Tibial artery (tissue), 4 donors: ENCODE measurements at regions of chr9 and their contacts with region 1.

Region 1: DNA sequence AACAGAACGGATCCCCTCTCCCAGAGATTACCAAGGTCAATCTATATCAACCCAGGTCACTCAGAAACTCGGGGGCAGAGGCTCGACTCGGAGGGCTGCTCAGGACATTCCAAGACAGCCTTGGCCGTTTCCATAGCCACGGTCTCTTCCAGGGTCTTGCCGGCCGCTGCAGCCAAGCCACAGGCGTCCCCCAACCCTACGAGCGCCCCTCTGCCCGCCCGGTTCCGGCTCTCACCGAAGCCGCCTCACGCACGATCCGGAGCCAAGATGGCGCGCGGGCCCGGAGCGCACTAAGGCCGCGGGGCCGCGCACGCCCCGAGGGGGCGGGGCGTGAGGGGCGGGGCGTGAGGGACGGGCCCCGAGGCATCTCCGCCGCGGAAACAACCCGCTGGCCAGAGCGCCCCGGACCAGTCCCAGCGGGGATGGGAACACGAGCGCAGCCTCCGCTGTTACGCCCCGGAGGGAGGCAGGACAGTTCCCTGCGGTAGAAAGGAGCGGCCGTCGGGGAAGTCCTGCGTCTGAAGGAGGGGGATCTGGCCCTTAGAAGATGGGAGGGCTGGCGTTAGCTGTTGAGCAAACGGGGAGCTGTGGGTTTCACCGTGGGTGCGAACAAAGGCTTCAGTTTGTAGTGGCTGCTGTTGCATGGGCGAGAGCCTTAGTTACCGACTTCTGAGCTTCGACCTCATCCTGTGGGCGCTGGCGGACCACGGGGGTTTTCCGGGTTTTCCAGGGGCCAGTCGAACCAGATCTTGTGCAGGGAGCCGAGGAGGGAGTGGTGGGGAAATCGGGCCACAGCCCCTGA is at the start of gene RPP25L:
- DNase-seq: peak; percentile 85 to 93
- H3K4me3 ChIP-seq: peak within 1 kb of the TSS; percentile 60 to 63
- H3K27ac ChIP-seq: peak within 1 kb of the TSS; percentile 76 to 83
- H3K4me1 ChIP-seq: peaks cover 0 to 24% (median 20%) of the 10 kb centered on the region in 4 donors
- H3K27me3 ChIP-seq: no peaks in the 10 kb centered on the region
- CTCF ChIP-seq: no peak

Region 2: DNA sequence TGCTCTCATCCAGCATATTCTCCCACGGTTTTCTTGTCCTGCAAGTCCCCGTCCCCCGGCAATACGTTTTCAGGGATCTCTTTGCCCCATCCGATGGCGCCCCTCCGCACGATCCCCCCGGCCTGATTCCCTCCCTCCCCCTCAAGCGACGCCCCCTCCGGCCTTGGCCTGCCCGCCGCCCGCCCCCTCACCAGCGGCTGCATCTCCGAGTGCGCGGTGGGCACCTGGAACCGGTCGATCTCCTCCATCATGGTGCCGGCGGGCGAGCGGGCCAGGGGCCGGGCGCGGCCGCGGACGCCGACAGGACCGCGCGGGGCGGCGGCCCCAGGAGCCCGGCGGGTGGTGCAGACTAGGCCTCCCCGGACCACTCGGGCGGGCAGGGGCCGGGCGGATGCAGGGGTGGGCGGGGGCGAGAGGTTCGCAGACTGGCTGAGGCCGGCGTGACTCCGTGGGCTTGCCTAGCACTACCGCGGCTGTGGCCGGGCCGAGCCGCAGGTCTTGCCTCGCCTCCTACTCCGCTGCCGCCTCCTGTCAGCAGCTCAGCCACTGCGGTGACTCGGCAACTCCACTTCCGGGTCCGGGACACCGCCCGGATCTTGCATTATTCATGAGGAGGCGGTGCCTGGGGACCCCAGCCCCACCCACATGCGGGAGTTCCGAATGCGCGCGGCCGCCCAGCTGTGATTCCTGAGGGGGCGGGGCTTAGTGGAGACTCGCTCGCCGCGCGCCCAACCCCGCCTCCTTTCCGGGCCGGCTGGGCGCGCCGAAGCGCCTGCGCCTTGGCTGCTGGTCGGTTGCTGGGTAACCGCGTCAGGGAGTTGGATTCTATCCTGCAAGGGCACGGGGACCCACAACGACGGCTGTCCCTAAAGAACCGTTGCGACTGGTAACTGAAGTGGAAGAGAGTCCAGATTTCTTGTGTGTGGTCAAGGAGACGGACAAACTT is 153.7 kb before region 1 on chr9 and contains the starts of genes DNAI1 and FAM219A:
- intact Hi-C with region 1: loop called (anchors 10 kb)
- DNase-seq: peak; percentile 98 to 99
- H3K4me3 ChIP-seq: peak within 1 kb of the TSS; percentile 66 to 81
- H3K27ac ChIP-seq: peak within 1 kb of the TSS; percentile 67 to 81
- H3K4me1 ChIP-seq: peaks cover 0 to 41% (median 22%) of the 10 kb centered on the region in 4 donors
- H3K27me3 ChIP-seq: no peaks in the 10 kb centered on the region
- CTCF ChIP-seq: no peak

Region 3: GRCh38 chr9:34546834-34547827 is 64.9 kb before region 1 on chr9:
- intact Hi-C with region 1: no loop called
- DNase-seq: peak in 1 of 2 donors; percentile 65
- H3K4me3 ChIP-seq: no peak overlapping the region
- H3K27ac ChIP-seq: no peak overlapping the region
- H3K4me1 ChIP-seq: no peaks in the 10 kb centered on the region
- H3K27me3 ChIP-seq: peaks cover 0 to 28% of the 10 kb centered on the region in 2 donors
- CTCF ChIP-seq: peak; percentile 45 to 51

Region 4: DNA sequence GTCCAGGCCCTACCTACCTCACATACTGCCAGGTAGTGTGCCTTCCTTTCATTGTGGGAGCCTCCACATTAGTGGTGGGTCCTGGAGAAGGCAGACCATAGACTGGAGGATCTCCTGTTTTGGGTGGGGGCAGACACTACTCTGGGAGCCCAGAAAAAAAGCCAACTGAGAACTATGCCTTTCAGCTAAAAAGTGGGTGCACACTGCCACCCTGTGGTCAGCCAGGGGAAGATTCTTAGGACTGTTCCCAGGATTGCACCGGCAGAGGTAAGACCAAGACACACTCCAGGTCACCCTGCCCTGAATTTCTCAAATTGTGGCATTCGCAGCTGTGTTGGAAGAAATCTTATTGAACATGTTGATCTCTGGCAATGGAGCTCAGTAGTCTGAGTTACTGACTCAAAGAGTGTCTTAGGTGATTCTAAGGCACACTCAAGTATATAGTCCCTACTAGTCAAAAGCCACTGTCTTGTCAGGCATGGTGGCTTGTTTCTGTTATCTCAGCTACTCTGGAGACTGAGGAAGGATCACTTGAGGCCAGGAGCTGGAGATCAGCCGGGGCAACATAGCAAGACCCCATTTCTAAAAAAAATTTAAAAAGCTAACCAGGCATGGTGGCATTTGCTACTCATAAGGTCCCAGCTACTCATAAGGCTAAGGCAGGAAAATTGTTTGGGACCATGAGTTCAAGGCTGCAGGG is 22.0 kb after region 1 on chr9:
- intact Hi-C with region 1: loop called (anchors 2 kb)
- DNase-seq: no peak
- H3K4me3 ChIP-seq: no peak overlapping the region
- H3K27ac ChIP-seq: no peak overlapping the region
- H3K4me1 ChIP-seq: peaks cover 0 to 34% (median 28%) of the 10 kb centered on the region in 4 donors
- H3K27me3 ChIP-seq: peaks cover 5 to 20% of the 10 kb centered on the region in 2 donors
- CTCF ChIP-seq: peak; percentile 76 to 80

Region 5: GRCh38 chr9:34701769-34702736 is 90.0 kb after region 1 on chr9:
- intact Hi-C with region 1: loop called (anchors 10 kb)
- DNase-seq: peak; percentile 86 to 91
- H3K4me3 ChIP-seq: peak overlapping the region; percentile 64 to 71
- H3K27ac ChIP-seq: peak overlapping the region; percentile 83
- H3K4me1 ChIP-seq: peaks cover 0 to 5% (median 4%) of the 10 kb centered on the region in 4 donors
- H3K27me3 ChIP-seq: no peaks in the 10 kb centered on the region
- CTCF ChIP-seq: peak; percentile 94 to 99